PC-9 (cell line): ENCODE measurements at regions of chr20 and their contacts with region 1.

Region 1: GRCh38 chr20:37796121-37796520 is 102.3 kb downstream of the CTNNBL1 start:
- DNase-seq: no peak
- H3K4me3 ChIP-seq: no peak overlapping the region
- H3K27ac ChIP-seq: no peak overlapping the region
- H3K4me1 ChIP-seq: no peaks in the 10 kb centered on the region
- H3K27me3 ChIP-seq: no peaks in the 10 kb centered on the region
- CTCF ChIP-seq: no peak

Region 2: GRCh38 chr20:37758332-37758731 is 37.8 kb before region 1 on chr20:
- CTCF ChIA-PET with region 1: no interaction called
- POLR2A ChIA-PET with region 1: no interaction called
- intact Hi-C with region 1: no loop called
- DNase-seq: no peak
- H3K4me3 ChIP-seq: no peak overlapping the region
- H3K27ac ChIP-seq: no peak overlapping the region
- H3K4me1 ChIP-seq: no peaks in the 10 kb centered on the region
- H3K27me3 ChIP-seq: no peaks in the 10 kb centered on the region
- CTCF ChIP-seq: no peak; the same call in 1 of the 2 replicates

Region 3: DNA sequence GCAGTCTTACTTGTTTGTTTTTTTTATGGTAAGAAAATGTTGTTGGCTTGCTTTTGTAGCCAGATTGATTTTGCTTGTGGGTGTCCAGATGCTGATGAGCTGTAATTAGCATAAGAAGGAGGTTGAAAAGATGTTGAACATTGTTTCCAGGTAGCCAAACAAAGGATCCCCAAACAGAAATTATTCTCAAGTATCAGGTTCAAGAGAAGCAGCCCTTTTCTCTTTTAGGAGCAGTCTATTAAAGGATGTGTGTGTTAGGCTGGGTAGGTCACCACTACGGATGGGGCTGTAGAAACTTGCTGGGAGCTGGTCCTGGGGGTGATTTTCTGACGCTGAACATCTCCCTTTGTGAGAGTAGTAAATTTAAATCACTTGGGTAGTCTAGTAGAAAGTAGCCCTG is 19.9 kb after region 1 on chr20:
- CTCF ChIA-PET with region 1: no interaction called
- POLR2A ChIA-PET with region 1: no interaction called
- intact Hi-C with region 1: no loop called
- DNase-seq: no peak
- H3K4me3 ChIP-seq: no peak overlapping the region
- H3K27ac ChIP-seq: no peak overlapping the region
- H3K4me1 ChIP-seq: no peaks in the 10 kb centered on the region
- H3K27me3 ChIP-seq: no peaks in the 10 kb centered on the region
- CTCF ChIP-seq: no peak

Region 4: DNA sequence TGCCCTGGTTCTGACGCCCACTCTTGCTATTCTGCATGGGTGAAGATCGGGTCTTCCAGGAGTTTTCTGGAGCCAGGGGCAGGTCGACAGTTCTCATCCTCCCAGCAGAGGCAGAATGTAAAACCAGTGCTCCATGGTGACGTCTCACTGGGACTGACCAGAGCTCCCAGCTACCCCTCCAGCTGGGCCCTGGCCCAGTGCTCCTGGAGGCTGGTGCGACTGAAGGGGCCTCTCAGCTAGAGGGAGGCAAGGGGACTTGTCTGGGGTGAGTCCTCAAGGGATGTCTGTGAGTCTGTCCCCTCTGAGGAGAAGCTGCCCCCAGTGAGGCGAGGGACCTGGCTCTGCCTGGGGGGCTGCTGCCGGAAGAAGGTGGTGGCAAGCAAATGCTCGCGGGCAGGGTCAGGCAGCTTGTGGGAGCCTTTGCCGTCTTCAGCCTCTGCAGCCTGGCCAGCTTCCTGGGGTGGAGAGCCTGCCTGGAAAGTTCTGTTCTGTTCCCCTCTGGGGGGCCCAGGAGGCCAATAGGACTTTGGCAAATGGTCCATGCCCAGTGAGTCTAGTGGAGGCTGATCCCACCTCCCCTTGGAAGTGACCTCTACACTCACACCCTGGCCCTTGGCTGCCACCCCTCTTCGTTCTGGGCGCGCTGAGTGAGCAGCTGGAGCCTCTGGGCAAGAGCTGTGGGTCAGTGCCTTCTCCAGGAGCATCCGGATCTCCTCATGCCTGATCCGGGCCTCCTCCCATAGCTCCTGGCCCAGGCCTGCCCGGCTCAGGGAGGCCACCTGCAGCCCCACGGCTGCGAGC is 416.9 kb after region 1 on chr20:
- CTCF ChIA-PET with region 1: no interaction called
- POLR2A ChIA-PET with region 1: interaction called, 15 read pairs
- intact Hi-C with region 1: no loop called
- DNase-seq: no peak
- H3K4me3 ChIP-seq: no peak overlapping the region
- H3K27ac ChIP-seq: no peak overlapping the region
- H3K4me1 ChIP-seq: peaks cover 22% of the 10 kb centered on the region
- H3K27me3 ChIP-seq: no peaks in the 10 kb centered on the region
- CTCF ChIP-seq: no peak